Naive thymus-derived CD4-positive, alpha-beta T cell (primary cell): ENCODE measurements at regions of chr1 and their contacts with region 1.

Region 1: GRCh38 chr1:116737020-116737854 is 17.0 kb upstream of the CD2 start:
- DNase-seq: peak; percentile 57 to 85 (median 80)
- ATAC-seq: peak; percentile 69
- H3K4me3 ChIP-seq: peak overlapping the region; percentile 28
- H3K4me3 Mint-ChIP-seq: peak overlapping the region; percentile 74 to 87 (median 82)
- H3K27ac ChIP-seq: peak overlapping the region; percentile 96
- H3K27ac Mint-ChIP-seq: peak overlapping the region; percentile 95 to 100 (median 98)
- H3K4me1 ChIP-seq: peaks cover 26 to 44% of the 10 kb centered on the region in 2 donors
- H3K4me1 Mint-ChIP-seq: peaks cover 39 to 54% (median 46%) of the 10 kb centered on the region in 7 donors
- H3K27me3 ChIP-seq: no peaks in the 10 kb centered on the region
- H3K27me3 Mint-ChIP-seq: no peaks in the 10 kb centered on the region

Region 2: GRCh38 chr1:116724765-116725375 is 12.4 kb before region 1 on chr1:
- CTCF ChIA-PET with region 1: interaction called, 18 read pairs
- POLR2A ChIA-PET with region 1: interaction called, 3 read pairs
- intact Hi-C with region 1: loop called in 1 of 2 experiments (anchors 1 kb)
- DNase-seq: peak; percentile 45 to 74 (median 70)
- ATAC-seq: peak; percentile 77
- H3K4me3 ChIP-seq: no peak overlapping the region
- H3K4me3 Mint-ChIP-seq: no peak overlapping the region
- H3K27ac ChIP-seq: no peak overlapping the region
- H3K27ac Mint-ChIP-seq: no peak overlapping the region
- H3K4me1 ChIP-seq: no peaks in the 10 kb centered on the region
- H3K4me1 Mint-ChIP-seq: peaks cover 4 to 27% (median 13%) of the 10 kb centered on the region in 7 donors
- H3K27me3 ChIP-seq: no peaks in the 10 kb centered on the region
- H3K27me3 Mint-ChIP-seq: no peaks in the 10 kb centered on the region

Region 3: DNA sequence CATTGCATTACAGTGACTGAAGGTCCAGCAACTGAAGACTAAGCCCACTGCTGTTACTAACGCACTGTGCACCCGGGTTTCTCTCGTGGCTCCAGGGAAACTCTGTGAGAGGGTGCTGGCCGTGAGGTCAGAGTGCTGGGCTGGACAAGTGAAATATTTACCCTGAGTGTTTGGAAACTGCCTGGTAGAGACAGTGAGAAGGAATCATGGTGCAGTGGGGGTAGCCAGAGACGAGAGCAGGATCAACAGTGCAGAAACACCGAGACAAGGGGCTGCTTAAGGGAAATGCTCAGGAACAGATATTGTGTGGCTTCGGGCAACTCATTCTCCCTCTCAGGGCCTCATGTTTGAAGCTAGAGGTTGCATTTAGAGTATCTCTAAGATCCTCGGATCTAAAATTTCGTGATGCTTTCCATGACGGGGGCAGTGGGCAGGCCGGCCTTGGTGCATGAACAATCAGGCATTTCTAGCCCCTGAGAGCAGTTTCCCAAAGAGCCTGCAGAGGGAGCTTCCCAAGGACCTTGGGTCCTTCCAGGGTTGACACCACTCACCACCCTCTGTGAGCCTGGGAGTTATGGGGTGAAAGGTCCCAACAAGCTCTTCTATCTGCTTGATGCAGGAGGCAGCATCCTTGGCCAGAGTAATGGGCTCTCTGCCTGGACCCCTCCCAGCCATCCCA is 26.7 kb after region 1 on chr1:
- CTCF ChIA-PET with region 1: interaction called, 60 read pairs
- POLR2A ChIA-PET with region 1: interaction called, 126 read pairs
- intact Hi-C with region 1: loop called (anchors 1 kb)
- DNase-seq: peak in 2 of 9 donors; percentile 64 to 66
- ATAC-seq: peak; percentile 10
- H3K4me3 ChIP-seq: peak overlapping the region; percentile 17
- H3K4me3 Mint-ChIP-seq: peak overlapping the region; percentile 79 to 99 (median 85)
- H3K27ac ChIP-seq: peak overlapping the region; percentile 89
- H3K27ac Mint-ChIP-seq: peak overlapping the region; percentile 93 to 100 (median 97)
- H3K4me1 ChIP-seq: peaks cover 94 to 100% of the 10 kb centered on the region in 2 donors
- H3K4me1 Mint-ChIP-seq: peaks cover 74 to 100% (median 94%) of the 10 kb centered on the region in 7 donors
- H3K27me3 ChIP-seq: no peaks in the 10 kb centered on the region
- H3K27me3 Mint-ChIP-seq: no peaks in the 10 kb centered on the region

Region 4: GRCh38 chr1:116826818-116827606 is 89.8 kb after region 1 on chr1:
- CTCF ChIA-PET with region 1: interaction called, 4 read pairs
- POLR2A ChIA-PET with region 1: interaction called, 4 read pairs
- intact Hi-C with region 1: loop called in 1 of 2 experiments (anchors 1 kb)
- DNase-seq: peak in 3 of 9 donors; percentile 11 to 64 (median 46)
- ATAC-seq: peak; percentile 59
- H3K4me3 ChIP-seq: no peak overlapping the region
- H3K4me3 Mint-ChIP-seq: peak overlapping the region in 6 of 10 donors; percentile 1 to 76 (median 22)
- H3K27ac ChIP-seq: no peak overlapping the region
- H3K27ac Mint-ChIP-seq: peak overlapping the region; percentile 10 to 94 (median 77)
- H3K4me1 ChIP-seq: peaks cover 10 to 12% of the 10 kb centered on the region in 2 donors
- H3K4me1 Mint-ChIP-seq: peaks cover 11 to 60% (median 25%) of the 10 kb centered on the region in 7 donors
- H3K27me3 ChIP-seq: no peaks in the 10 kb centered on the region
- H3K27me3 Mint-ChIP-seq: peaks cover 0 to 3% (median 0%) of the 10 kb centered on the region in 5 donors

Region 5: DNA sequence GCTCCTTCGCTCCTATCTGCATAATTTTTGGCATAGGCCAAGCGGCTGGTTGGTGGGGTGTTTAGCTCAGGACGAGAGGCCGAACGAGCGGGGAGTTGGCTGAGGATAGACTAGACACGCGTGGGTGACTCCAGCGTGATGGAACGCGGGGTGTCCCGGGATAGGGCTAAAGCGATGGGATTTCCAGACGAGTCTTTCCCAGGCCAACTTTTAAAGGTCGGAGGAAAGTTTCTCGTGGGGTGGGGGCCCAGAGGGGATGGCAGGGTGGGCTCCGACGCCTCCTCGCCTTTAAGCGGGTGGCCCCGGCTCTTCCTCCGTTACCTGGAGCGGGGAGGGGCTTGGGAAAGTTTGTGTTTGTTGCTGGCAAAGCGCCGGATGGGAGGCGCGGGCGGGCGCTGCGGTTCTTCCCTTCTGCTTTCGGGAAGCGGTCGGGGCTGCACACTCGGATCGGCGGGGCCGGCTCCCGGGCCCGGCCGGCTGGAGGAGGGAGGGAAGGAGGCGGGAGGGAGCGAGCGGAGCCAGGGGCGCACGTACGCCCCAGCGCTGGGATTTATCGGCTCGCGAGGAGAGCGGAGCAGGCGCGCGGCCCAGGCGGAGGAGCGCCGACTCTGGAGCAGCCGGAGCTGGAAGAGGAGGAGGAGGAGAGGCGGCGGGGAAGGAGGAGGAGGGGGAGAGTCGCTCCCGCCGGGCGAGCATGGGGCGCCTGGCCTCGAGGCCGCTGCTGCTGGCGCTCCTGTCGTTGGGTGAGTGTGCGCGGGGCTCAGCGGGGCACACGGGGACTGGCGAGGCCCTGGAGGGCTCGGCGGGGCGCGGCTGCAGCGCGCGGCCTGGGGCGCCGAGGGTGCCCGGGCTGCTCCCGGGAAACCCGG is 172.5 kb after region 1 on chr1 and contains the start of gene PTGFRN:
- CTCF ChIA-PET with region 1: no interaction called
- POLR2A ChIA-PET with region 1: no interaction called
- intact Hi-C with region 1: loop called in 1 of 2 experiments (anchors 1 kb)
- DNase-seq: peak in 7 of 9 donors; percentile 5 to 45 (median 22)
- ATAC-seq: peak; percentile 62
- H3K4me3 ChIP-seq: peak within 1 kb of the TSS; percentile 68
- H3K4me3 Mint-ChIP-seq: peak within 1 kb of the TSS in 9 of 10 donors; percentile 72 to 91 (median 84)
- H3K27ac ChIP-seq: peak within 1 kb of the TSS; percentile 52
- H3K27ac Mint-ChIP-seq: peak within 1 kb of the TSS; percentile 18 to 82 (median 64)
- H3K4me1 ChIP-seq: peaks cover 0 to 10% of the 10 kb centered on the region in 2 donors
- H3K4me1 Mint-ChIP-seq: peaks cover 0 to 8% (median 6%) of the 10 kb centered on the region in 7 donors
- H3K27me3 ChIP-seq: no peaks in the 10 kb centered on the region
- H3K27me3 Mint-ChIP-seq: peaks cover 0 to 7% (median 0%) of the 10 kb centered on the region in 5 donors
- total RNA-seq, gene PTGFRN: 1.00 to 5.6 (median 1.5) TPM

Region 6: GRCh38 chr1:117009132-117009531 is 271.9 kb after region 1 on chr1:
- CTCF ChIA-PET with region 1: no interaction called
- POLR2A ChIA-PET with region 1: no interaction called
- intact Hi-C with region 1: loop called in 1 of 2 experiments (anchors 5 kb)
- DNase-seq: peak in 6 of 9 donors; percentile 27 to 55 (median 44)
- ATAC-seq: peak; percentile 70
- H3K4me3 ChIP-seq: no peak overlapping the region
- H3K4me3 Mint-ChIP-seq: peak overlapping the region; percentile 42 to 85 (median 73)
- H3K27ac ChIP-seq: peak overlapping the region; percentile 42
- H3K27ac Mint-ChIP-seq: peak overlapping the region; percentile 72 to 96 (median 92)
- H3K4me1 ChIP-seq: peaks cover 0 to 44% of the 10 kb centered on the region in 2 donors
- H3K4me1 Mint-ChIP-seq: peaks cover 31 to 86% (median 65%) of the 10 kb centered on the region in 7 donors
- H3K27me3 ChIP-seq: no peaks in the 10 kb centered on the region
- H3K27me3 Mint-ChIP-seq: no peaks in the 10 kb centered on the region

Region 7: DNA sequence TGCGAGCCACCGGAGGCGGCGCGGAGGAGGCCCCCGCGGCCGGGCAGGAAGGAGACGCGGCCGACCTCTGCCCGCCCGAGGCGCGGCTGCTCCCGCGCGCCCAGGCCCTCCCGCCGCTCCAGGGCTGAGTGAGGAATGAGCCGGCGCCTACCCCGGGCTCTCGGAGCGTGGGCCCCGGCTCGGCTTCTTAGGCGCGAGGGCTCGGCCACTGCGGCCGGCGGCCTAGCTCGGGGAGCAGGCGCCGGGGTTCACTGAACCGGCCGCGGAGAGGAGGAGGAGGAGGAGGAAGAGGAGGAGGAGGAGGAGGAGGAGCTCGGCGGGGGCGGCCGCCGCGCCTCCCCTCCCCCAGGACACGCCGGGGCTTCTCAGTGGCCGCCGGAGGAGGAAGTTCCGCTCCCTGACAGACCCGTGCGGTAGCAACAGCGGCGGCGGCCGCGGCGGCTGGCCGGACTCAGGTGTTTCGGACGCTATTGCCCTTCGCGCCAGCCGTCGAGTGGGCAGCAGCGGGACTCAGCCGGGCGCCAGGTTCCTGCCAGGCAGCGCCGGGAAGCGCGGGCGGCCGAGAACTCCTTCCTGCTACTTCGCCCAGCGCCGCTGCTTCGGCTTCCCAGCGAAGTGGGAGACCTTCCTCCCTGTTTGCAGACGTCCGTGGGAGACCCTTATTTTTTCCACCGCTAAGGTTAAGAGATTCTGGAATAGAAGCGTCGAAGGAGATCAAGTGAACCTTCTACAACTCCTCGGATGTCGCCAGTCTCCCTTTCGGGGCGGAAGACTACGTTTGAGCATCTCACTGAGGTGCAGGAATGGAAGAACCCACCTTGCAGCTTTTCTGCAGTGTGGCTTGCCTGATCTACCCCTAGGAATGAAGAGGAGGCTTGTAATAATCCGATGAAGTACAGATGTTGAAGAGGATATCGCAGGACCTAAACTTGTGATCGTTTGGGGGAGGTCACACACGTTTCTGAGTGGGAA is 630.1 kb after region 1 on chr1 and contains the start of gene MAN1A2:
- CTCF ChIA-PET with region 1: no interaction called
- POLR2A ChIA-PET with region 1: no interaction called
- intact Hi-C with region 1: loop called in 1 of 2 experiments (anchors 5 kb)
- DNase-seq: peak in 7 of 9 donors; percentile 59 to 79 (median 75)
- ATAC-seq: peak; percentile 78
- H3K4me3 ChIP-seq: peak within 1 kb of the TSS; percentile 83
- H3K4me3 Mint-ChIP-seq: peak within 1 kb of the TSS; percentile 92 to 98 (median 95)
- H3K27ac ChIP-seq: peak within 1 kb of the TSS; percentile 91
- H3K27ac Mint-ChIP-seq: peak within 1 kb of the TSS; percentile 92 to 99 (median 97)
- H3K4me1 ChIP-seq: peaks cover 23 to 44% of the 10 kb centered on the region in 2 donors
- H3K4me1 Mint-ChIP-seq: peaks cover 46 to 82% (median 73%) of the 10 kb centered on the region in 7 donors
- H3K27me3 ChIP-seq: no peaks in the 10 kb centered on the region
- H3K27me3 Mint-ChIP-seq: no peaks in the 10 kb centered on the region
- total RNA-seq, gene MAN1A2: 40.4 to 63.4 (median 47.1) TPM